ENCODE measurements at regions of chr17 and their contacts with region 1.

Region 1: GRCh38 chr17:48074315-48075081 is 26.3 kb downstream of the NFE2L1 start:
- DNase-seq: peak; percentile 78
- H3K4me3 Mint-ChIP-seq: no peak overlapping the region
- H3K27ac Mint-ChIP-seq: no peak overlapping the region
- H3K4me1 Mint-ChIP-seq: no peaks in the 10 kb centered on the region
- H3K27me3 Mint-ChIP-seq: no peaks in the 10 kb centered on the region

Region 2: DNA sequence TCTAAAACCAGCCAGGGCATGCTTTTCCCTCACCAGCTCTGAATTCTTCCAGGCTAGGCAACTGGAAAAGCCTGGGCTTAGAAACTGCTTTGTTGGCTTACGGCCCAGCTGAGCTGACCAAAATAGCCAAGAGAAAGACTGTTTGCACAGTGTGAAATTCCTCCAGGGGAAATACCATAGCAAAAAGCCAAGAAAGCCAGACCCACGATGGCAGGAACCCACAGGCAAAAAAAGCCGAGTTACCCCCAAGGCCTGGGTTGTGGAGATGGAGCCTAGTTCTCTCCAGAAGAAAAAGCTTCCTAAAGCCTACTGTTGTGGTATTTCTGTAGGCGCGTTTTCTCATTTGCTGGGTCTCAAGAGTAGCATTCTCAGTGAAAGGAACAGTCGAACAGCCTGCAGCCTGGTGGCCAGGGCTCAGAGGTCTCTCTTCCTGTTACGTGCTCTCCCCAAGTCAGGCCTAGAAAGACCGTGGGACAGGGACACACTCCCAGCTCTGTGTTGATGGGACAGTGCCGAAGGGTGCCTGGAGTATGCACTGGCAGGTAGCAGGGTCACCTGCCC is 169.2 kb before region 1 on chr17:
- CTCF ChIA-PET with region 1: no interaction called
- POLR2A ChIA-PET with region 1: no interaction called
- intact Hi-C with region 1: no loop called
- DNase-seq: no peak
- H3K4me3 Mint-ChIP-seq: no peak overlapping the region
- H3K27ac Mint-ChIP-seq: no peak overlapping the region
- H3K4me1 Mint-ChIP-seq: peaks cover 19% of the 10 kb centered on the region
- H3K27me3 Mint-ChIP-seq: no peaks in the 10 kb centered on the region

Region 3: DNA sequence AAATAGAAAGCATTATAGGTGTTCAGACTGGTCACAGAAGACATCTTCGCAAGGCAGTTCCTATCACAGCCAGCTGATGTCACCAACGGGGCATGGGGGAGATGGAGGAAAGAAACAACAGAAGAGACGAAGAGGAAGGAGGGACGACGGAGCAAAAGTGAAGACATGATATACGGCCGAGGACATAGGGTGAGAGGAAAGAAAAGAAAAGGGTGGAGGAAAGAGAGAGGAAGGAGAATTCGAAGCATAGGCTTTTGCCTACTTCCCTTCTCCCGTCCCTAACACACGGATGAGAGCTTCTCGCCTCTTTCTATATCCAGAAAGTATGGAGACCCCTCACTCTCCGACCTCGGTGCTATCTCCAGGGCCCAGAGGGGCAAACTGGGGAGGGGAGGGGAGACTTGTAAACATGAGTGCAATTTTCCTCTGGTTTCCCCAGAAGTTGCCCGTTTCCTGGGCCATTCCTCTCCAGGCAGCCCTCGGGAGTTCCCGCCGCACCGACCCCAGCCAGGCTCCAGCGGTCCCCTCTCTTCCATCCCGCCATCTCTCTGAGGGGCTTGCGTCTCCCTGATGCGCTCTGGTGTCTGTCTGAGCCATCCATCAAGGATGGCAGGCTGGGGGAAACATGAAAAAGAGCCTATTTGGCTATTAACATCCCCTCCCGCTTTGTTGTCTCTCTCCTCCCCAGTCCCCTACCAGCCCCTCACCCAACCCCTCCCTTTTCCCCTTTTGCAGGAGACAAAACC is 62.9 kb before region 1 on chr17:
- CTCF ChIA-PET with region 1: interaction called, 16 read pairs
- POLR2A ChIA-PET with region 1: no interaction called
- intact Hi-C with region 1: no loop called
- DNase-seq: peak; percentile 67
- H3K4me3 Mint-ChIP-seq: peak overlapping the region; percentile 66
- H3K27ac Mint-ChIP-seq: no peak overlapping the region
- H3K4me1 Mint-ChIP-seq: peaks cover 13% of the 10 kb centered on the region
- H3K27me3 Mint-ChIP-seq: peaks cover 45% of the 10 kb centered on the region

Region 4: GRCh38 chr17:48037036-48037837 is 37.3 kb before region 1 on chr17 and contains the start of gene COPZ2:
- CTCF ChIA-PET with region 1: interaction called, 28 read pairs
- POLR2A ChIA-PET with region 1: no interaction called
- intact Hi-C with region 1: loop called (anchors 2 kb)
- DNase-seq: peak; percentile 76
- H3K4me3 Mint-ChIP-seq: peak within 1 kb of the TSS; percentile 78
- H3K27ac Mint-ChIP-seq: no peak within 1 kb of the TSS
- H3K4me1 Mint-ChIP-seq: peaks cover 7% of the 10 kb centered on the region
- H3K27me3 Mint-ChIP-seq: peaks cover 36% of the 10 kb centered on the region
- total RNA-seq, gene COPZ2: 4.9 to 6.2 TPM

Region 5: DNA sequence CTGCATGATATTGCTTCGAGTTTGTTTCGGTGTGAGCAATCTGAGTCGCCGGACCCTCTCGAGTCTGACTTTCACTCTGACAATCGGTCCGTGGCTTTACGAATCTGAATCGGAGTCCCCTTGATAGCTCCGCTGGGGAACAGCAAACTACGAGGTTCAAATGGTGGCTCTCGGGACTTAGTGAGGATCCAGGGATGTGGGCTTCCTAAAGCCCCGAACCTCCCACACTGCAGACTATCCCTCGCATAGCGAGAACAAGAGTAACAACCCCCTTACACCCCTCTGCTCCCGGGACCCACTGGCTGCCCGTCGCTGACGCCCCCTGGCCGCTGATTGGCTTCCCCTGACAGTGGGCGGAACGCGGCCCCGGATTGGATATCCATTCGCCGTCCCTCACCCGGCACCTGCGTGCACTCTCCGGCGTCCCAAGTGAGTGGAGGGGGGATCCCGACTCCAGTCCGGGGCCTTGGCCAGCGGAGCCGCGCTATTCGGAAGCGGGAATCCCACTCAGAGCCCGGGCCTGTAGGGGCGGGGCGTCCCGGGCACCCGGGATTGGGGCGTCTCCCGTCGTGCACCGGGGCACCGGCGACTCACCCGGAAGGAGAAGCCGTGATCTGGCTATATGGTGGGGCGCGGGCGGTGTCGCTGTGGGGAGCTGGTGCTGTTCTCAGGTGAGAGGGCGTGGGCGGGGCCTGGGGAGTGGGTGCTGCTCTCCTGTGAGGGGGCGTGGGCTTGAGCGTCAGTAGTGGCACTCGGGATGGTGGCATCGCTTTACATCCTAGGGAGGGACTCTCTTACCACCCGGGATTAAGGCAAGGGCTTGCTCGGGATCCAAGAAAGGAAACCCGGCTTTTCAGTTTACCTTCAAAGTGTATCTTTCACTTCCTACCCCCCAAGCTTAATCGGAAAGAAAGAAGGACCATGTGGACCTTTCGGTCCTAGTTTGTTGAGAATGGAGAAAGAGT is 33.0 kb after region 1 on chr17 and contains the start of gene SNX11:
- CTCF ChIA-PET with region 1: interaction called, 12 read pairs
- POLR2A ChIA-PET with region 1: no interaction called
- intact Hi-C with region 1: no loop called
- DNase-seq: peak; percentile 95
- H3K4me3 Mint-ChIP-seq: peak within 1 kb of the TSS; percentile 100
- H3K27ac Mint-ChIP-seq: peak within 1 kb of the TSS; percentile 97
- H3K4me1 Mint-ChIP-seq: peaks cover 59% of the 10 kb centered on the region
- H3K27me3 Mint-ChIP-seq: no peaks in the 10 kb centered on the region
- total RNA-seq, gene SNX11: 19.7 to 21.7 TPM

Region 6: DNA sequence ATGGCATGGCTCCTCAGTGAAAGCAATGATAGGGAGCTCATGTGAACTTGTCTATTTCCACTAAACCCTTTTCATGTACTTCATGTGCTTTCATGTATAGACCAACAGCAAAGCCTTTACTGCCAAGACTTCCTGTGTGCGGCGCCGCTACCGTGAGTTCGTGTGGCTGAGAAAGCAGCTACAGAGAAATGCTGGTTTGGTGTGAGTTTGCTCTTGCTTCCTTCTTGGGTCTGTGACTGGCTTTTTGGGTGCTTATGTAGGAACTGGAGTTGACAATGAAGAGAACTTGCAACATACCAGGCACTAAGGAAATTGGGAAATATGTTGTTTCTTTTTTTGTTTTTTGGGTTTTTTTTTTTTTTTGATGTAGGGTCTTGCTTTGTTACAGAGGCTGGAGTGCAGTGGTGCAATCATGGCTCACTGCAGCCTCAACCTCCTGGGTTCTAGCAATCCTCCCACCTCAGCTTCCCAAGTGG is 38.7 kb after region 1 on chr17:
- CTCF ChIA-PET with region 1: interaction called, 12 read pairs
- POLR2A ChIA-PET with region 1: no interaction called
- intact Hi-C with region 1: no loop called
- DNase-seq: peak; percentile 71
- H3K4me3 Mint-ChIP-seq: peak overlapping the region; percentile 57
- H3K27ac Mint-ChIP-seq: peak overlapping the region; percentile 83
- H3K4me1 Mint-ChIP-seq: peaks cover 48% of the 10 kb centered on the region
- H3K27me3 Mint-ChIP-seq: no peaks in the 10 kb centered on the region

Region 7: DNA sequence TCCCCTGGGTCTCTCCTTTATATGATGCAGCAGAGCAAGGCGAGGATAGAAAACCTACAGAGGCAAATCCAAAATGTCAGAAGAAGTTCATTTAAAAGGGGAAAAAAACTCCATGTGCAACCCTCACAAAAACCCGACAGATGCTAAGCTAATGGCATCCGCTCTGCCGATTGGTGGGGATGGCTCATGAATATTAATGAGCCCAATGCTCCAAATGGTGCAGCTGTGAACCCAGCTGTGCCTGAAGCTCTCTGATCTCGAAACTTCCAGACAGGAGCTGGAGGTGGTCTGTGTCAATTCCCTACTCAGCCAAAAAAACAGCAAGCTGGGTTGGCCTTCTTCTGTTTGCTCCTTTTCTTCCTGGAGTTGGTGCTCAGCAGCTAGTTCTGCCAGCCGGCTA is 48.6 kb after region 1 on chr17:
- CTCF ChIA-PET with region 1: interaction called, 79 read pairs
- POLR2A ChIA-PET with region 1: no interaction called
- intact Hi-C with region 1: no loop called
- DNase-seq: no peak
- H3K4me3 Mint-ChIP-seq: no peak overlapping the region
- H3K27ac Mint-ChIP-seq: peak overlapping the region; percentile 62
- H3K4me1 Mint-ChIP-seq: peaks cover 6% of the 10 kb centered on the region
- H3K27me3 Mint-ChIP-seq: no peaks in the 10 kb centered on the region

Region 8: DNA sequence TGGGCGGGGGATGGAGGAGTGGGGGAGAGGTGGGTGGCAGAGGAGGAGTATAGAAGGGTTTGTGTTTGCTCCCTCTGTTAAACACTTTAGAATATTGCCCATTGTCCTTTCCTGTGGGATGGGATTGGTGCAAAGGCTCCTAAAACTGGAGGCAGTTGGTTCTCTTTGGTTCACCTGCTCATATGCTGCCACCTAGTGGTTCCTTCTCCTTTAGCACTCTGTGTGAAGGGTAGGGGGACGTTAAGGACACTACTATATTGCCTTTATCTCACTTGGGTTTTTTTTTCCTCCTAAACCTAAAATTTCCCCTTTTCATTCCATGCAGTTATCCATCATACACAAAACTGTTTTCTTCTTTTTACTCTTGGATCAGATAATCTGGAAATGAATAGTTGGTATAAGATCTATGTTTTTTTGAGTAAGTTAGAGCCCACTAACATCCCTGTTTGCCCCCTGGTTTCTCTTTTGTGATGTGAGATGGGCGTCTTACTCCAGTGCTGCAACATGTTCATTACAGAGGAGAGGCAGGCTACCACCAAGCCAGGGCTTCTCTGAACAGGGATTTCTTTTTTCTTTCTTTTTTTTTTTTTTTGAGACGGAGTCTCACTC is 56.8 kb after region 1 on chr17:
- CTCF ChIA-PET with region 1: interaction called, 79 read pairs
- POLR2A ChIA-PET with region 1: no interaction called
- intact Hi-C with region 1: no loop called
- DNase-seq: peak; percentile 49
- H3K4me3 Mint-ChIP-seq: no peak overlapping the region
- H3K27ac Mint-ChIP-seq: no peak overlapping the region
- H3K4me1 Mint-ChIP-seq: no peaks in the 10 kb centered on the region
- H3K27me3 Mint-ChIP-seq: no peaks in the 10 kb centered on the region

Region 9: DNA sequence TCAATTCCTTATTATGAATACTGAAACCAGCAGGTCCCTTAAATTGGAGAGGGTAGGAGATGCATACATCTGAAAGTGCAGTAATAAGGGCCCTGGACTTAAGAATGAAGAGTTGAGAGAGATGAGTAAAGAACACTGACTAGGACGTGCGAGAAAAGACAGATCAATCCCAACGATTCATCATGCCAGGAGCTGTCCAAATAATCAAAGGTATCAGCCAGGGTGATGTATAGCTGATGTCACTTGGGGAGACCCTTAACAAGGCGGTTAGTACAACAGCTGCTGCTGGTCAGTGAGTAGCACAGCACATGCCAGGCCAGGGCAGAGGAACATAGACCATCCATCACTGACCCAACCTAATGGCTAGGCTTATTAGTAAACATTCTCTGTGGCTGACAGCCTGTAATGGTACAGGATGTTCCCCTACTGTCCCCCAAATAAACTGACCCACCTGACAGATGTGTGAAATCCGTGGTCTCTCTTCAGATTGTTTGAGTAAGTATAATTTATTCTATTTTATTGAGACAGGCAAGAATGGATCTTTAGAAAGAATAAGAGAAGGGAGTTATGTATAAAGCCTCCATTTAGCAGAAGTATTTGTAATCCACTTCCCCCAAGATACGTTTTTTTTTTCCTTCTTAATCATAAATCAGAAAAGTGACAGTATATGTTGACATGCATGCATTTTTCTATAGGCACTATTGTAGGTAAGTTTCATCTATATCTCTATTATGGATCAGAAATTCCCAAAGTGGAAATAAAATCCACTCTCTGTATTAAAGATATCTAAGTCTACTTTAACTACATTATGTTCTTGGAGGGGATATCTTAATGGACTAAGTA is 151.4 kb after region 1 on chr17:
- CTCF ChIA-PET with region 1: no interaction called
- POLR2A ChIA-PET with region 1: no interaction called
- intact Hi-C with region 1: no loop called
- DNase-seq: no peak
- H3K4me3 Mint-ChIP-seq: no peak overlapping the region
- H3K27ac Mint-ChIP-seq: no peak overlapping the region
- H3K4me1 Mint-ChIP-seq: peaks cover 13% of the 10 kb centered on the region
- H3K27me3 Mint-ChIP-seq: no peaks in the 10 kb centered on the region